ENCODE measurements at regions of chr6 and their contacts with region 1.

Region 1: GRCh38 chr6:108541838-108542759 is 18.6 kb upstream of the FOXO3 start:
- DNase-seq: no peak
- ATAC-seq: peak; percentile 96
- H3K4me3 ChIP-seq: no peak overlapping the region
- H3K27ac ChIP-seq: no peak overlapping the region
- H3K4me1 ChIP-seq: peaks cover 3% of the 10 kb centered on the region
- H3K27me3 ChIP-seq: no peaks in the 10 kb centered on the region
- CTCF ChIP-seq: peak; percentile 86

Region 2: DNA sequence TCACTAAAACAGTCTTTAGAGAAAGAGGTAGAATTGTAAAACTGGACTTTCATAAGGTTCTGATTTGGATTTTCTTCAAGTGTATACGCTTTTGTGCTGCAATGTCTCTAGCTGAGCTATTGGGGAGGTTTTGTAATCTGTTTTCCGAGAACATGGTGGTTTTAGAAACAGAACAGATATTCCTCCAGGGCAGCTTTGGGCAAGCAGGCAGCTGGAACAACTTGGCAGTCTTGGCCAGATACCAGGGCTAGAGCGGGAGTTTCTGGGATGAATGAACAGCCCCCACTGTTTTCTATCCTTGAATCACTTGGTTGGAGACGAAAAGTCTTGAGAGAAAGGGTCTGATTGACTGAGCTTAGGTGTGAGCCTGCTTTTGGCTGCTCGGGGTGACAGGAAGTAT is 289.0 kb after region 1 on chr6:
- intact Hi-C with region 1: loop called (anchors 5 kb)
- DNase-seq: no peak
- ATAC-seq: no peak
- H3K4me3 ChIP-seq: no peak overlapping the region
- H3K27ac ChIP-seq: no peak overlapping the region
- H3K4me1 ChIP-seq: no peaks in the 10 kb centered on the region
- H3K27me3 ChIP-seq: no peaks in the 10 kb centered on the region
- CTCF ChIP-seq: no peak

Region 3: GRCh38 chr6:108896111-108896661 is 354.1 kb after region 1 on chr6:
- intact Hi-C with region 1: loop called (anchors 5 kb)
- DNase-seq: no peak
- ATAC-seq: peak; percentile 58
- H3K4me3 ChIP-seq: no peak overlapping the region
- H3K27ac ChIP-seq: peak overlapping the region; percentile 75
- H3K4me1 ChIP-seq: peaks cover 21% of the 10 kb centered on the region
- H3K27me3 ChIP-seq: no peaks in the 10 kb centered on the region
- CTCF ChIP-seq: no peak

Region 4: GRCh38 chr6:109073344-109074132 is 531.4 kb after region 1 on chr6:
- intact Hi-C with region 1: loop called (anchors 5 kb)
- DNase-seq: no peak
- ATAC-seq: peak; percentile 79
- H3K4me3 ChIP-seq: no peak overlapping the region
- H3K27ac ChIP-seq: no peak overlapping the region
- H3K4me1 ChIP-seq: peaks cover 19% of the 10 kb centered on the region
- H3K27me3 ChIP-seq: no peaks in the 10 kb centered on the region
- CTCF ChIP-seq: peak; percentile 70

Measured in upper lobe of right lung (tissue), 1 donor.